MCF 10A (cell line): ENCODE measurements at regions of chr3 and their contacts with region 1.

Region 1: GRCh38 chr3:45499529-45499928 is 95.0 kb upstream of the LIMD1 start:
- DNase-seq: peak; percentile 53
- H3K4me3 Mint-ChIP-seq: no peak overlapping the region
- H3K27ac Mint-ChIP-seq: no peak overlapping the region
- H3K4me1 Mint-ChIP-seq: no peaks in the 10 kb centered on the region
- H3K27me3 Mint-ChIP-seq: no peaks in the 10 kb centered on the region
- CTCF ChIP-seq: peak; percentile 46

Region 2: GRCh38 chr3:45224824-45225464 is 274.6 kb before region 1 on chr3:
- CTCF ChIA-PET with region 1: interaction called, 7 read pairs
- POLR2A ChIA-PET with region 1: no interaction called
- intact Hi-C with region 1: loop called (anchors 1 kb)
- DNase-seq: peak; percentile 67
- H3K4me3 Mint-ChIP-seq: peak overlapping the region; percentile 77
- H3K27ac Mint-ChIP-seq: no peak overlapping the region
- H3K4me1 Mint-ChIP-seq: peaks cover 6% of the 10 kb centered on the region
- H3K27me3 Mint-ChIP-seq: peaks cover 29% of the 10 kb centered on the region
- CTCF ChIP-seq: peak; percentile 64